RWPE1 (cell line): ENCODE measurements at regions of chr1 and their contacts with region 1.

Region 1: DNA sequence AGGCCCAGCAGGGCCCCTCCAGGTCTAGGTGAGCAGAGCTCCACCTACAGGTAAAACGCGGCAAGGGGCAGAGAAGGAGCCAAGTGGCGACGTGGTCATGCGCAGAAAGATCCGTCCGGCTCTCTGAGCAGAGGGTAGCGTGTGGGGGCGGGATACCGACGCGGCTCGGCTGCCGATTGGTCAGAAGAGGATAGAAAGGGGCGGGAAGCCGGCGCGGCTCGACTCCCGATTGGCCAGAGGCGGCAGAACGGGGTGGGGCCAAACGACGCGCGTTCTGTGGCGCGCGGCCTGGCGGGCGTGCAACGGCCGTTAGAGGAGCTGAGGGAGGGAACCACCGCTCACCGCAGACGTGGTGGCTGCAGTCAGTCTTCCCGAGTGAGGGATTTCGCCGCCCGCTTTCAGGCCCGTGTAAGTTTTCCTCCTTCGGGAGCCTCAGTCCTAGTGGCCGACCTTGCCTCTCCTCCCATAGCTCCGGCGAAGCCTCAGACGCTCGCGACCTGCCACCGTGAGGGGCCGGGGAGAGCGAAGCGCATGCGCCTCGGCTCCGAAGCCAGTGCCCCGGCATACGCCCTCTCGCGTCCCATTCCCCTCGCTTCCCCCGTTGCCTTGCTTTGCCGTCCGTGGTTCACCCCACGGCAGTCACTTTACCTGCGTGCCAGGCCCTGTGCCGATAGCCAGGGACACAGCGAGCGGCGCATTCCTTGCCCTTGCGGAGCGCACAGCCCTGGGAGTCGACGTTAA is at the start of gene CEP85:
- DNase-seq: peak; percentile 100
- H3K27ac ChIP-seq: peak within 1 kb of the TSS; percentile 86
- CTCF ChIP-seq: peak; percentile 91

Region 2: DNA sequence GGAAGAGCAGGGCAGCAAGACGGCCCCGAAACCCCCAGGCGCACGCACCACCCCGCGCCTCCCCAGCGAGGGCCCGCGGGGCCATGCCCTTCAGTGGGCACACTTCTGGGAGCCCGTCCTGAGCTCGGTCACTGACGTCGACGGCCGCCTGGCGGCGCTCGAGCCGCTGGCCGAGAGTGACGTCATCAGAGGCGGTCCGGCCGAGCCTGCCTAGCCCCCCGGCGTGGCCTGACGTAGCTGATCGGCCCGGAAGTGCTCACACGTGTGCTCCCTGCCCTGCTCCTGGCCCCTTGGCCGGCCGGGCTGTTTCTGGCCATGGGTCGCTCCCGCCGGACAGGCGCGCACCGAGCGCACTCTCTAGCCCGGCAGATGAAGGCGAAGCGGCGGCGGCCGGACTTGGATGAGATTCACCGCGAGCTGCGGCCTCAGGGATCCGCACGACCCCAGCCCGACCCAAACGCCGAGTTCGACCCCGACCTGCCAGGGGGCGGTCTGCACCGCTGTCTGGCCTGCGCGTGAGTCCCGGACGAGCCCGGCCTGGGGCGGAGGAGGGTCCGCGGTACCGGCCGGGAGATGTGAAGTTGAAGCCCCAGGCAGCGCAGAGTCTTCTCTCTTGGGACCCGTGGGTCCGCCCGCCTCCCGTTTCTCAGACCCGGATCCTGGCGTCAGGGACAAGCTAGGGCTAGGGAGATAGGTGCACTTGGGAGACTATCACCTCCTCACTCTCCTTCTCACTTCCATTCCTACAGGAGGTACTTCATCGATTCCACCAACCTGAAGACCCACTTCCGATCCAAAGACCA is 64.2 kb before region 1 on chr1 and contains the start of gene ZNF593:
- CTCF ChIA-PET with region 1: interaction called, 15 read pairs
- POLR2A ChIA-PET with region 1: interaction called, 5 read pairs
- DNase-seq: peak; percentile 93
- H3K27ac ChIP-seq: peak within 1 kb of the TSS; percentile 55
- CTCF ChIP-seq: peak; percentile 93

Region 3: DNA sequence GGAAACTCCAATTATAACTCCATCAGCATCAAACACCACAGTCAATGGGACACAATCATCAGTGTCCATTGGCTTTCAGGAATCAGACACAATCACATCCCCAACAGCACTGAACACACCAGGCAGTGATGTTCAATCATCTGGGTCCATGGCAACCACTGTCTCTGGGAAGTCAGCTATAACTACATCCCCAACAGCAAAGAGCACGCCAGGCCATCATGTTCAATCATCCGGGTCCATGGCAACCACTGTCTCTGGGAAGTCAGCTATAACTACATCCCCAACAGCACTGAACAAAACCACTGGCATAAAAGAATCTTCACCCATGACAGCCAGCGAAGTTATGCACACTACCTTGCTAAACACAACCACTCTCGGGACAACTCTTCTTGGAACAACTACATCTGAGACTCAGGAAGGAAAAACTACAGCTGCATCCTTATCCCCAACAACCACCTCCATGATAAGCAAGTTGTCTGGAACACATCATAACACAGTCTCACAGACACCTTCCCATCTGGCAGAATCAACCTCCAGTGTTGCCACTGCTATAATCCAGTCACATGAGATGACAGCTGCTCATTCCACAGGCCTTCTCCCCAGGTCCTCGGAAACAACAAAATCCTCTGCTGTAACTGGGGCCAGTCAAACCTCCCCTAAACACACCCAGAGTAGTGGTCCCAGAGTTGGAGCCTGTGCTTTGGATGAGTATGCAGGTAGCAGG is 23.8 kb before region 1 on chr1:
- CTCF ChIA-PET with region 1: interaction called, 14 read pairs
- POLR2A ChIA-PET with region 1: no interaction called
- DNase-seq: no peak
- H3K27ac ChIP-seq: no peak overlapping the region
- CTCF ChIP-seq: no peak

Region 4: DNA sequence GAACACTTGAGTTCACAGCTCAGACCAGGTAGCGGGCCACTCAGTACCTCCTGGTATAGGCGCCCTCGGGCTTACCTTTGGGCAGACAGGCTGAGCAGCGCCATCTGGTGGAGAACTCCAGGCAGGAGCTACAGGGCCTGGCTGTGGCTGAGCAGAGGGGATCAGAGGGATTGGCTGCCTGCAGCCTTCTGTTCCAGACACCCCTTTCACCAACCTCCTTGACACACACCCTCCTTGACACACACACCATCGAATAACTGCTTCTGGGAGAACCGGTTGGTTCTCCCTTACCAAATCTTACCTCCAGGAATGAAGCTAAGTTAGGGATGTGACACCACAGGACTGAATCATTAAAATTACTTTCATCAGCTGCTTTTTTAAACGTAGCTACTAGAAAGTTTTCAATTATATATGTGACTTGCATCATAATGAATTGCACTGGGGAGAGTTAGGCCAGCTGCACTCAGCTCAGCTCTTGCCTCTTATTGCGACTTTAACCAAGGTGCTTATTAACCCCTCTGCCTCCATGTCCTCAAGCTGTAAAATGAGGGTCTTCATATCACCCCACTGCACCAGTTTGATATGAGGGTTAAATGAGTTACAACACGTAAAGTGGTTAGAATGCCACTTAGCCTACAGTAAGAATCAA is 183.2 kb after region 1 on chr1:
- CTCF ChIA-PET with region 1: no interaction called
- POLR2A ChIA-PET with region 1: no interaction called
- DNase-seq: peak; percentile 73
- H3K27ac ChIP-seq: no peak overlapping the region
- CTCF ChIP-seq: peak; percentile 86